Mammary epithelial cell (primary cell): ENCODE measurements at regions of chr9 and their contacts with region 1.

Region 1: DNA sequence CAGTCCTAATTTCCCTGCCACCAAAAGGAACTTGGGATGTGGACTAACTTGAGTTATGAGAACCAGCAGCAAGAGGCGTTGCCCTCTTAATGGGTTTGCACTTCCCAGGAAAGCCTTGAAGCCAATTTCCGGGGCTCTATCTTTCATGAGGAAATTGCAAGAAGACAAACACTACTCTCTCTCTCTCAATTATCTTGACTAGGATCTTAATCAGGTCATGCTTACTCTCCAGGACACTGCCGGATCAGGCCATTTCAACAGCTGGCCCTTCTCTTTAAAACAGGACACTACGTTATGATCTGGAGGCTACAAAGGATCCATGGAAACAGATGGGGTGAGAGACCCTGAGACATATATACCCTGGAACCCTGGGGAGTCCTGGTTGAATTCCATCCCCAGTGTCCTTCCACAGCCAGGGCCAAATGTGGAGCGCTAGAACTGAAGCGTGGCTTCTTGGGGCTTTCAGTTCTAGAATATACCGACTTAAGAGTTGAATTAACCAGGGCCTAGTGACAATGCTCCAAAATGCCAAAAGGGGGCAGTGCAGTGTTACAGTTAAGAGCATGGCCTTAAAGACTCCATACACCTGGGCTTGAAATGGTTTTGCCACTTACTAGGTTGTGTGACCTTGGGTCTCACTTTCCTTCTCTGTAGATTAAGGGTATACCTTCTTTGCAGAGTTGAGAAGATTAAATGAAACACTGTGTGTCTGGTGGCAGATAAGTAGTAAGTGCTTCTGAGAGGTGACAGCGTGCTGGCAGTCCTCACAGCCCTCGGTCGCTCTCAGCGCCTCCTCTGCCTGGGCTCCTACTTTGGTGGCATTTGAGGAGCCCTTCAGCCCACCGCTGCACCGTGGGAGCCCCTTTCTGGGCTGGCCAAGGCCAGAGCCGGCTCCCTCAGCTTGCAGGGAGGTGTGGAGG is 21.1 kb downstream of the FAM219A start:
- DNase-seq: peak; percentile 61
- H3K4me3 ChIP-seq: no peak overlapping the region
- H3K27ac ChIP-seq: no peak overlapping the region
- H3K4me1 ChIP-seq: no peaks in the 10 kb centered on the region
- H3K27me3 ChIP-seq: no peaks in the 10 kb centered on the region
- CTCF ChIP-seq: peak; percentile 79 to 93

Region 2: GRCh38 chr9:34458013-34458958 is 21.0 kb after region 1 on chr9 and contains the starts of genes DNAI1 and FAM219A:
- CTCF ChIA-PET with region 1: no interaction called
- dilution Hi-C with region 1: no loop called
- in situ Hi-C with region 1: no loop called
- intact Hi-C with region 1: loop called (anchors 2 kb)
- DNase-seq: peak; percentile 98
- H3K4me3 ChIP-seq: peak within 1 kb of the TSS; percentile 64 to 86 (median 77)
- H3K27ac ChIP-seq: peak within 1 kb of the TSS; percentile 73
- H3K4me1 ChIP-seq: peaks cover 36% of the 10 kb centered on the region
- H3K27me3 ChIP-seq: no peaks in the 10 kb centered on the region
- CTCF ChIP-seq: no peak
- total RNA-seq, gene DNAI1: not detected
- total RNA-seq, gene FAM219A: 12.3 to 27.4 TPM

Region 3: DNA sequence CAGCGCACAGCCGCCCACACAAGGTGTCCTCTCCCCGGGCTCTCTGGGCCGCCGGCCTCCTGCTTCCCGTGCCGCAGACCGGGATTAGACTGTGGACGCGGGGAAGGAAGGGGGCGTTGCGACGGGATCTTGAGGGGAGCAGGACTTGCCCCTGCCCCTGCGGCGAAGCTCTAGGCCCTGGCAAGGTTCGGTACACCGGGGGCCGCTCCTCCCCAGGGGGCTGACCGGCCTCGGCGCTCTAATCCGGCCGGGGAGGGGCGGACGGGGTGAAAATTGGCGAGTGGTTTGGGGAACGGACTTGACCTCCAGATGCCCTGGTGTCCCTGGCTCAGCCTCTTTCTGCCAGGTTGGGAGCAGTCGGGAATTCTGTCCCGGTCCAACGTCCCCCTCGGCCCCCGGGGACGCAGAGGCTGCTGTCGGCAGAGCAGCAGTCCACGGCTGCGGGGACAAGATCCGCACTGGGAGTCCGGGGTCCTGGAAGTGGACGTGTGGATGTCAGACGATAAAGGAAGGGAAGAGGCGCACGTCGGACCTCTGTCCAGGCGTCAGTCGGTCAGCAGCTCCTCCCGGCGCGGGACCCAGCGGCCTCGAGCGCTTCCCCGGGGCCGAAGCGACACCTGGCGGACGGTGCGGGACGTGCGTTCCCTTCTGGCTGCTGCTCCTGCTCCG is 154.1 kb after region 1 on chr9:
- CTCF ChIA-PET with region 1: no interaction called
- dilution Hi-C with region 1: no loop called
- in situ Hi-C with region 1: no loop called
- intact Hi-C with region 1: loop called (anchors 1 kb)
- DNase-seq: peak; percentile 57
- H3K4me3 ChIP-seq: no peak overlapping the region
- H3K27ac ChIP-seq: no peak overlapping the region
- H3K4me1 ChIP-seq: peaks cover 14% of the 10 kb centered on the region
- H3K27me3 ChIP-seq: peaks cover 42% of the 10 kb centered on the region
- CTCF ChIP-seq: peak; percentile 79 to 89